MCF 10A (cell line): ENCODE measurements at regions of chr2 and their contacts with region 1.

Region 1: GRCh38 chr2:25951071-25951547 is 31.2 kb downstream of the KIF3C start:
- DNase-seq: peak; percentile 85
- H3K4me3 Mint-ChIP-seq: no peak overlapping the region
- H3K27ac Mint-ChIP-seq: no peak overlapping the region
- H3K4me1 Mint-ChIP-seq: no peaks in the 10 kb centered on the region
- H3K27me3 Mint-ChIP-seq: no peaks in the 10 kb centered on the region
- CTCF ChIP-seq: peak; percentile 91

Region 2: DNA sequence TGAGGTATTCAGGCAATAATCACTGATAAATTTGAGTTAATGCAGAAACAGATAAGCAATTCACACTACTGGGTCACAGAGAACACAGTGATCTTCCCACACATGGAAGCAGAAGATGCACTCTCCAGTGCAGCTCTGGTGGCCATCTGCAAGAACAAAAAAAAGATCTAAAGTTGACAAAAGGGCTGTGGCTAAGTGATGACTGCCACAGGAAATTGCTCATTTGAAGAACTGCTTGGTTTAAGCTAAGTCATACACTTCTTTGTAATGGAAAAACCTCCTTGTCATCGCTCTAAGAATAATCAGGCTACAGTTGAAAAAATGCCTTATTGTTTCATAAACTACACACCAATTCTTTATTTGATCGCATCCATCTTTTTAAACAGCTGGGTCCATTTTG is 392.8 kb before region 1 on chr2:
- CTCF ChIA-PET with region 1: no interaction called
- POLR2A ChIA-PET with region 1: no interaction called
- intact Hi-C with region 1: no loop called
- DNase-seq: no peak
- H3K4me3 Mint-ChIP-seq: no peak overlapping the region
- H3K27ac Mint-ChIP-seq: no peak overlapping the region
- H3K4me1 Mint-ChIP-seq: no peaks in the 10 kb centered on the region
- H3K27me3 Mint-ChIP-seq: no peaks in the 10 kb centered on the region
- CTCF ChIP-seq: no peak

Region 3: GRCh38 chr2:25851740-25852503 is 99.2 kb before region 1 on chr2:
- CTCF ChIA-PET with region 1: interaction called, 23 read pairs
- POLR2A ChIA-PET with region 1: no interaction called
- intact Hi-C with region 1: loop called (anchors 1 kb)
- DNase-seq: peak; percentile 73
- H3K4me3 Mint-ChIP-seq: no peak overlapping the region
- H3K27ac Mint-ChIP-seq: no peak overlapping the region
- H3K4me1 Mint-ChIP-seq: peaks cover 20% of the 10 kb centered on the region
- H3K27me3 Mint-ChIP-seq: no peaks in the 10 kb centered on the region
- CTCF ChIP-seq: peak; percentile 68

Region 4: DNA sequence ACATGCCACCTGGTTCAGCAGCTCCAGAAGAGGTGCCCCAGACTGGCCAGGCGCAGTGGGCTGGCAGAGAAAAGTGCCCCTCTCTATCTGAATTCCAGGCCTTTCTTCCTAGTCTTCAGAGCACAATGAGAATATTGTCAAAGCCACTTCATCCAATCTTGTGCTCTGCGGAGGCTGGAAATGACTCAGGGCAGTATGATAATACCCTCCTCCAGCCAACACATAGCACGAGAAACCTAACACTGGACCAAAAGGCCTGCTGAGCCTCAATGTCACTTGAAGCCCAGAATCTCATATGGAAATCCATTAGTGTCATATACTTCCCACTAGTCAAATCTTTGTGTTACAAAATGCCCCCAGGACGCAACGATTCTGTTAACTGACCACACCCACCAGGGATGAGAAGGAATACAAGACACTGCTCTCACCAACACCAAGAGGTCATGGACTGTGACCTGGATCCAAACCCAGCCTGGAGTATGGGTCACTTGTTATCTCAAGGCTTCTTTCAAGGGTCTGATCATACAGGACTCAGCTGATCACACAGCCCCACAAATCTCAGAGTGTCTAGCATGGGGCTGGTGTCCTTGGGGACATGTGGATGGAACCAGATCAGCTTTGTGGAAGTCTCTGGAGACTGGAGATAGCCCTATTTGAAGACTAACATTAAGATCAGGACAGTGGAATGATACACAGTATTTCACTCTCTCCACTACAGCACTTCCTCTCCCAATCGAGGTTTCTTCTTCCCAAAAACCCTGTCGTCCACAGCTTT is 21.1 kb after region 1 on chr2:
- CTCF ChIA-PET with region 1: interaction called, 11 read pairs
- POLR2A ChIA-PET with region 1: no interaction called
- intact Hi-C with region 1: no loop called
- DNase-seq: no peak
- H3K4me3 Mint-ChIP-seq: no peak overlapping the region
- H3K27ac Mint-ChIP-seq: peak overlapping the region; percentile 1
- H3K4me1 Mint-ChIP-seq: peaks cover 5% of the 10 kb centered on the region
- H3K27me3 Mint-ChIP-seq: no peaks in the 10 kb centered on the region
- CTCF ChIP-seq: no peak

Region 5: GRCh38 chr2:25991965-25992364 is 40.9 kb after region 1 on chr2:
- CTCF ChIA-PET with region 1: interaction called, 7 read pairs
- POLR2A ChIA-PET with region 1: interaction called, 3 read pairs
- intact Hi-C with region 1: loop called (anchors 1 kb)
- DNase-seq: no peak
- H3K4me3 Mint-ChIP-seq: no peak overlapping the region
- H3K27ac Mint-ChIP-seq: no peak overlapping the region
- H3K4me1 Mint-ChIP-seq: peaks cover 11% of the 10 kb centered on the region
- H3K27me3 Mint-ChIP-seq: no peaks in the 10 kb centered on the region
- CTCF ChIP-seq: no peak

Region 6: DNA sequence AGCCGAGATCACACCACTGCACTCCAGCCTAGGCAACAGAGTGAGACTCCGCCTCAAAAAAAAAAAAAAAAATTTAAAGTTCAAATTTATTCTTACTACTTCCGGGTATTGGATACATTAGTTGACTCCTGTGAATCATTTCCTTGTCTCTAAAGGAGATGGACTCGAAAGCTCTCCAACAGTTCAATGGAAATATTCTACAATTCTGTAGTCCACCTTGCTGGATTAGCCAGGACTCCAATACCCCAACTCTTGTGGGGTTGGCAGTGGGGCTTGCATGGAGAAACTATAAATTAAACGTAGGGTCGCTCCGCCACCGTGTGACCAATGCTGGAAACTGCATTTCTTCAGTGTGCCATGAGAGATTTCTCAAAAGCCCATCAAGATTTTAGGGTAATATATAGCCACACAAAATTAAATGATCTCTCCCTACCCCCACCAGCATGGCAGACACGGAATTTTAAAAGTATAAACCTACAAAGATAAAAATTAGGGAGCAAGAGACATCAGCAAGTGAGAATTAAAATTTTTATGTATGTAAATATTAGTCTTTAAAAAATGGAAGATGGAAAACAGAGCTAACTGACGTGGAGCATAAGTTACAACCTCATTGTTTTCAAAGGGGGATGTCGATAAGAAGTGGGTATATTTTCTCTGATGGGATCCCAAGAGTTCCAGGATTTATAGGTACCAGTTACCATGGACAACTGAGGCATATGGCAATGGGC is 194.0 kb after region 1 on chr2:
- CTCF ChIA-PET with region 1: interaction called, 23 read pairs
- POLR2A ChIA-PET with region 1: interaction called, 7 read pairs
- intact Hi-C with region 1: loop called (anchors 1 kb)
- DNase-seq: peak; percentile 74
- H3K4me3 Mint-ChIP-seq: no peak overlapping the region
- H3K27ac Mint-ChIP-seq: peak overlapping the region; percentile 72
- H3K4me1 Mint-ChIP-seq: peaks cover 6% of the 10 kb centered on the region
- H3K27me3 Mint-ChIP-seq: peaks cover 6% of the 10 kb centered on the region
- CTCF ChIP-seq: peak; percentile 84

Region 7: GRCh38 chr2:26330113-26330549 is 379.0 kb after region 1 on chr2:
- CTCF ChIA-PET with region 1: interaction called, 5 read pairs
- POLR2A ChIA-PET with region 1: no interaction called
- intact Hi-C with region 1: loop called (anchors 1 kb)
- DNase-seq: peak; percentile 81
- H3K4me3 Mint-ChIP-seq: no peak overlapping the region
- H3K27ac Mint-ChIP-seq: no peak overlapping the region
- H3K4me1 Mint-ChIP-seq: peaks cover 14% of the 10 kb centered on the region
- H3K27me3 Mint-ChIP-seq: peaks cover 9% of the 10 kb centered on the region
- CTCF ChIP-seq: peak; percentile 82

Region 8: DNA sequence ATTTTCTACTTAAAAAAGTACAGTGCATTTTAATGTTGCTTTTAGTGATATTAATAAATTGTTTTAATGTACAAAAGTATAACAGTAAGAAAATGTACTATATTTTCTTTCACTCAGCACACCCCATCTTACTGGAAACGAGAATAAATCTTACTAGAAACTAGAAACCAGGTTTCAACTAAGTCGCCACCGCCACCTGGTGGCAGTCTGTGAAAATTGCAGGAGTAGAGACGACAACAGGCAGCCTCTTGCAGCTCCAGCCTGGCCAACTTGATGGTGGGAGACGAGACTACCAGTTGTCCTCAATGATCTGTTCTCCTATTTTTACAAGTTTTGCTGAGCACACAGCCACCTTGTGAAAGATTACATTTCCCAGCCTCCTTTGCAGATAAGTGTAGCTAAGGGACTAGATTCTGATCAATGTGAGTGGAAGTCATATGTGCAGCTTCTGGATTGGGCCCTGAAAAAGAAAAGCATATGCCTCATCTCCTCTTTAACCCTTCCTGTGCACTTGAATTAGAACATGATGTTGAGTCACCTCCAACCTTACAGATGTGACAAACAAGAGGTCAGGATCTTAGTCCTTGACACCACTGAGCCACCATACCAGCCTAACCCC is 518.1 kb after region 1 on chr2:
- CTCF ChIA-PET with region 1: interaction called, 5 read pairs
- POLR2A ChIA-PET with region 1: no interaction called
- intact Hi-C with region 1: loop called (anchors 2 kb)
- DNase-seq: peak; percentile 84
- H3K4me3 Mint-ChIP-seq: no peak overlapping the region
- H3K27ac Mint-ChIP-seq: no peak overlapping the region
- H3K4me1 Mint-ChIP-seq: no peaks in the 10 kb centered on the region
- H3K27me3 Mint-ChIP-seq: no peaks in the 10 kb centered on the region
- CTCF ChIP-seq: peak; percentile 75